SK-N-SH (cell line): ENCODE measurements at regions of chr20 and their contacts with region 1.

Region 1: DNA sequence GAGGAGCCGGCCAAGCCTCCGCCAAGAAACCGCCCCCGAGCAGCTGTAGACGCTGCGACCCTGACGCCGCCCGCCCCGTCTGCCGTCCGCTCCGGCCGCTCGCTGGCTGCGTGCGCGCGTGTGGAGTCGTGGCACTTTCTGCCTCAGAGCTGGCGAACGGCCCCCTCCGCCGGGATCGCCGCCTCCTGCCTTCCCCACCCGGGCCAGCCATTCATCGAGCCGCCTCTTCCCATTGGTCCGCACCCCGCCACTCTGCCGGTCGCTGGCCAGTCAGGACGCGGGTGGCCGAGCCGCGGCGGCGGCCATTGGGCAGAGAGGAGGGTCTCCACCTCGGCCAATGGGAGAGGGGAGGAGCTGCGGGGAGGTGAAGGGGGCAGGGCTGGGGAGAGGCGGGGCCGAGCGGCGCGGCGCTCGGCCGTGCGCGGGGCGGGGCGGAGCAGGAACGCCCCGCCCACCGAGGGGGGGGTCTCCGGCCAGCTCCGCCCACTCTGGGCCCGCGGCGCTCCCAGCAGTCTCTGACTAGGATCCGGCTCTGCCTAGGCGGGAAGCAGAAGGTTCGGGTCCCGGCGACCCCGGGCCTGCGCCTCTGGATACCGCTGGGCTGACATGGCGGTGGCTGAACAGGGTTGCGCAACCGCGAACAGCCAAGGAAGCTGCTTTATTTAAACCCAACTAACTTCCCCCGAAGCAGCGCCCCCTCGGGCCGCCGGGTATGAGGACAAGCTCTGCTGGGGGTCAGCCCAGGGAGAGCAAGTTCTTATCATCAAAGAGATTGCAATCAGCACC is at the start of gene RRBP1:
- DNase-seq: peak; percentile 98
- H3K4me3 ChIP-seq: peak within 1 kb of the TSS; percentile 79 to 87
- H3K27ac ChIP-seq: peak within 1 kb of the TSS; percentile 62 to 68; a peak in 3 of 4 replicates
- H3K4me1 ChIP-seq: peaks cover 8 to 11% of the 10 kb centered on the region in 2 experiments; a peak in 2 of 4 replicates
- H3K27me3 ChIP-seq: peaks cover 32% of the 10 kb centered on the region
- CTCF ChIP-seq: peak; percentile 86
- EP300 ChIP-seq: no peak
- RAD21 ChIP-seq: no peak
- polyA plus RNA-seq, gene RRBP1: 31.0 and 50.2 TPM in 2 replicates

Region 2: DNA sequence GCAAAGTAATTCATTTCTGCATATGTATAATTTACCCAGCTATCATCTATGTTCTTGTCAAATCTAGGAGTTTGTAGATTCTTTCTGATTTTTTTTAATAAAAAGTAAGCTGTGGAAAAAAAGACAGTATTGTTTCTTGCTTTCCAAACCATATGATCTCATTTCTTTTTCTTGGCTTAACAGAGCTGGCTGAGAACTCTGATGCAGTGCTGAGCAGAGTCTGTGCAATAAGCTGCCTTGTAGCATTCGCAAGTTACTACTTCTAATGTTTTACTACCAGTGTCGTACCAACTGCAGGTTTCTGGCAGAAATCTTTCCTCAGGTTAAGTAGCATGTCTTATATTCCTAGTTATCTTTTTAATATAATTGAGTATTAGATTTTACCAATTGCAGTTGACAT is 15.8 kb before region 1 on chr20:
- CTCF ChIA-PET with region 1: interaction called, 11 read pairs
- POLR2A ChIA-PET with region 1: no interaction called
- DNase-seq: no peak
- H3K4me3 ChIP-seq: no peak overlapping the region
- H3K27ac ChIP-seq: peak overlapping the region in 1 of 2 experiments; percentile 52; a peak in 2 of 4 replicates
- H3K4me1 ChIP-seq: peaks cover 3 to 47% of the 10 kb centered on the region in 2 experiments; a peak in 2 of 4 replicates
- H3K27me3 ChIP-seq: no peaks in the 10 kb centered on the region
- CTCF ChIP-seq: no peak
- EP300 ChIP-seq: no peak
- RAD21 ChIP-seq: no peak

Region 3: DNA sequence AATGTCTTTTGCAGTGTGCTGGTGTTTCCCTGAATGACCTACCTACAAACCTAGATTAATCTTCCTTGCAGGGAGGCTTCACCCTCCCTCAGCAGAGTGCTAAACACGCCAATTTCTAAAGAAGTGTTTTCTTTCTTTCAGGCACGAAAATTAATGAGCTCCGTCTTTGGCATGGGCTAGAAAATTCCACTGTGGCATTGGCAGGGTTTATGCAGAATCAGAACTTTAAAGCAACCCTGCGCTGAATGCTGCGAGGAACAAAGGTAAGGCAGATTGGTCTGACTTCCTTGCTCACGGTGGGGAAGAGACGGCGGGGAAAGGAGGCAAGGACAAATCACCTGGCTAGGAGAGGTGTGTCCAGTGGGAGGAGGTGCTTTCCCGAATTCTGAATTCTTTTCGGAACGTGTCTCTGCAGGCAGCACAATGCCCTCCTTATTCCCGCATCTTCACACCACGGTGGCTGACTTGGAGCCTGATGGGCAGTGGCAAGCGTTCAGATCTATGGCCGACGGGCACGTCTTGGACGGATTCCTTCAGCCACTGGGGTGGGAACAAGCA is 11.2 kb after region 1 on chr20:
- CTCF ChIA-PET with region 1: interaction called, 17 read pairs
- POLR2A ChIA-PET with region 1: no interaction called
- DNase-seq: no peak
- H3K4me3 ChIP-seq: no peak overlapping the region
- H3K27ac ChIP-seq: no peak overlapping the region
- H3K4me1 ChIP-seq: no peaks in the 10 kb centered on the region
- H3K27me3 ChIP-seq: peaks cover 7% of the 10 kb centered on the region; the same call in 1 of the 2 replicates
- CTCF ChIP-seq: no peak
- EP300 ChIP-seq: no peak
- RAD21 ChIP-seq: no peak

Region 4: GRCh38 chr20:17898548-17898994 is 216.3 kb after region 1 on chr20:
- CTCF ChIA-PET with region 1: interaction called, 34 read pairs
- POLR2A ChIA-PET with region 1: no interaction called
- DNase-seq: peak; percentile 69
- H3K4me3 ChIP-seq: no peak overlapping the region; a peak in 1 of 4 replicates
- H3K27ac ChIP-seq: no peak overlapping the region
- H3K4me1 ChIP-seq: peaks cover 2 to 5% of the 10 kb centered on the region in 2 experiments; a peak in 2 of 4 replicates
- H3K27me3 ChIP-seq: no peaks in the 10 kb centered on the region
- CTCF ChIP-seq: peak; percentile 91
- EP300 ChIP-seq: no peak
- RAD21 ChIP-seq: peak; percentile 95

Region 5: GRCh38 chr20:17938871-17939619 is 256.7 kb after region 1 on chr20:
- CTCF ChIA-PET with region 1: interaction called, 75 read pairs
- POLR2A ChIA-PET with region 1: no interaction called
- DNase-seq: peak; percentile 80
- H3K4me3 ChIP-seq: no peak overlapping the region; a peak in 1 of 4 replicates
- H3K27ac ChIP-seq: no peak overlapping the region
- H3K4me1 ChIP-seq: peaks cover 0 to 11% of the 10 kb centered on the region in 2 experiments; a peak in 1 of 4 replicates
- H3K27me3 ChIP-seq: no peaks in the 10 kb centered on the region
- CTCF ChIP-seq: peak; percentile 77
- EP300 ChIP-seq: no peak
- RAD21 ChIP-seq: peak; percentile 84